ENCODE measurements at regions of chr10 and their contacts with region 1.

Region 1: DNA sequence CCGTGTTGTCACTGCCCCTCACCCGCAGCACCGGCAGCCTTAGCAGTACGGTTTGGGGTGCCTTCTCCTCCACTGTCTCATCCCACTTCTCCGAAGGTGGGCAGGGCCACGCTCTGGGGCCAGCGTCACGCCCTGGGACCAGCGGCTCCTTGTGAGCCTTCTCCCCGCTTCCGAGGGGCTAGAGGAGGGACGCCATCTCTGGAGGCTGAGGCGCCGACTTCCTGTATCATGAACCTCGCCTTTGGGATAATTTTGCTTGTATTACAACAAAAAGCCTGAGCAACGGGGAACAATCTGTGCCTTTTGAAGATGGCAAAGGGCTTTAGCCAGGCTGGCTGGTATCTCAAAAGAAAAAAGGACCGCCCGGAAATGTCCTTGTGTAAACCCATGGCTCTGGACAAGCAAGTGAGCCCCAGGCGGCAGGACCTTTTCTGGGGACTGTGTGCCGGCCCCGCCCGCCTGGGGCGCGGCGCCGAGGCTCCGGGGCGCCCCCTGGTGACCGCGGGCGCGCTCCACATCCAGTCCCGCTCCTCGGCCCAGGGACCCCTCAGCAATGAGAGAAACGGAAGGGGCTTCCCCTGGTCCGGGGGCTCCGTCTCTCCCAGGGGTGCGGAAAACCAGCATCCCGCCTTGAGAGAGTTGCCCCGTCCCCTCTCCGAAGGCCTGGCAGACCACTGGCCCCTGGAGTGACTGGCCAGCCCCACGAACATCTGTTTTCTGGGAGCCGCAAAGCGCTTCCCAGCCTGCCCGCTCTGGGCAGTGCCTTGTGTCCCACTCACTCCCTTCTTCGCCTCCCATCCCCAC is 3.8 kb downstream of the DEPP1 start:
- DNase-seq: peak; percentile 70 to 91 (median 78)
- ATAC-seq: peak; percentile 50 to 66 (median 53)
- H3K4me3 ChIP-seq: peak overlapping the region in 2 of 4 donors; percentile 26 to 97
- H3K27ac ChIP-seq: peak overlapping the region; percentile 71 to 97 (median 88)
- H3K4me1 ChIP-seq: peaks cover 18 to 22% (median 19%) of the 10 kb centered on the region in 3 donors
- H3K27me3 ChIP-seq: no peaks in the 10 kb centered on the region
- CTCF ChIP-seq: peak; percentile 94 to 98 (median 95)

Region 2: DNA sequence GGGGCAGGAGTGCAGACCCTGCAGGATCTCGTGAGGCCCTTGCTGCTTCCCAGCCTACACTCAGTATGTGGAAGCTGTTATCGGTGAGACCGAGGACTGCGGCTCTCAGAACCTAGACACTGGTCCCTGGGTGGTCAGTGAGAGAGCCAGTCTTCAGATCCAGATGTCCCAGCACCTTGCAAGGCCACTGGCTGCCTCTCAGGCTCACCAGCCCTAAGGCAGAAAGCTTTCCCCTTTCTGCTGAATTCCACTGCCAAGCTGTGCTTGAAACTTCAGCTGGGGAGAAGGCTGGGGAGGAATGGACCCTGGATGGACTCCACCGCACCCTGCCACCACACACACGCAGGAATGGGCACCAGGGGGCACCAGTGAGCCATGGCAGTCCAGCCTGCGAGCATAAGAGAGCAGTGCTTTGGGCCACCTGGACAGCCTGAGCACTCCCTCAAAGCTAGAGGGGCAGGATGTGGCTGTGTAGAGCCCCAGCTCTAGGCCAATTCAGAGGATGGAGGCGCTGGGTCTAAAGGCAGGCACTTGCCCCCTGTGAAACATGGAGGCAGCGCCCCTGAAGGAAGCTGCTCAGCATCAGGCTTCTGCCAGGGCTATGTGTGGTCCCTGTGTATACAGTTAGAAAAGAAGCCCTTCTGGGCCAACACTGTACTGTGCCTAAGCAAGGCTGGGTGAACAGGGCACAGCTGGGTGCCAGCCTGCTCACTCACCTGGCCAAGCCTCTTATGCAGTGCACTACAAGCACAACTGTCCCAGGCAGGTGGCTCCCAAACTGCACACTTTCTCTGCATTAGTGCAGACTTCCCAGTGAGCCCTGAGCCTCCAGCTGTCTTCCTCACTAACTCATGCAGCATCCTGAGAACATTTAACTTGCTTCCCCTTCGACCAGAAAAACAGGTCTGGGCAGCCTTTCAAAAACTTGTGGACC is 42.0 kb before region 1 on chr10:
- intact Hi-C with region 1: loop called in 2 of 3 experiments (anchors 2 to 5 kb)
- DNase-seq: peak; percentile 83 to 100 (median 94)
- ATAC-seq: peak; percentile 89 to 94 (median 93)
- H3K4me3 ChIP-seq: no peak overlapping the region
- H3K27ac ChIP-seq: peak overlapping the region in 2 of 4 donors; percentile 35 to 49
- H3K4me1 ChIP-seq: peaks cover 0 to 8% (median 5%) of the 10 kb centered on the region in 3 donors
- H3K27me3 ChIP-seq: no peaks in the 10 kb centered on the region
- CTCF ChIP-seq: peak; percentile 96 to 98 (median 97)